CD4-positive, alpha-beta memory T cell (primary cell): ENCODE measurements at regions of chr1 and their contacts with region 1.

Region 1: DNA sequence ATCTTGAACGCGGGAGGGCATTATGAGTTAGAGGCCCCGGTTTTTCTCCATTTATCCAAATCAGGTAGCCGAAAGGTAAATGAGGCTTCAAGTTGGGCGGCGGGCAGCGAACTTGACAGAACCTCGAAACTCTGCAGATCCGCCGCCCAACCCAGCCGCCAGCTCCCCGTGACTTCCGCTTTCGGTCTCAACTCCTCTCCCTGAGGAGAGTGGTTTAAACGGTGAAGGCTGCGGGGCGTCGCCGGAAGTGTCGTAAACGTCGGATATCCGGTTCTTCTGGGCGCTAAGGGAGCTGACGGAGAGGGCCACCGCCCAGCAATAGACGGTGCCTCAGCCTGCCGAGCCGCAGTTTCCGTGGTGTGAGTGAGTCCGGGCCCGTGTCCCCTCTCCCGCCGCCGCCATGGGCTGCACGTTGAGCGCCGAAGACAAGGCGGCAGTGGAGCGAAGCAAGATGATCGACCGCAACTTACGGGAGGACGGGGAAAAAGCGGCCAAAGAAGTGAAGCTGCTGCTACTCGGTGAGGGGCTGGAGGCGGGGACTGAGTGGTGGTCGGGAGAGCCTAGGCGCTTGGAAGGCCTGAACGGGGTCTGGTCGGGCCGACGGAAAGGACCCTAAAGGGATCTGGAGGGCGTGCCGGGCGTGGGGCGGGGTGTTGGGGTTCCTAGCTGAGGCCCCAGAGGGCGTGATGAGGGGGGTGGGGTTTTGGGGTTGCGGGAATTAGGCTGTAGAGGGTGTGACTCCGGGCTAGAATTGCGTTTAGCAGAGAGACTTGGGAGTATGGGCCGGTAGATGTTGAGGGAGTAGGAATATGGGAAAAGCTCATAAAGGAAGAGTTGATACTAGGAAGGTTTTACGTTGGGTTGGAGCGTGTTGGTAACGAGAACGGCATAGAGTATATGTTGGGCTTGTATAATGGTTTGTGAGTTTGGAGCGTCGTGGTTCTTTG is at the start of gene GNAI3:
- DNase-seq: peak; percentile 94 to 99 (median 96)
- H3K4me3 ChIP-seq: peak within 1 kb of the TSS; percentile 94 to 99
- H3K4me3 Mint-ChIP-seq: peak within 1 kb of the TSS; percentile 93 to 100 (median 98)
- H3K27ac ChIP-seq: peak within 1 kb of the TSS; percentile 97
- H3K27ac Mint-ChIP-seq: peak within 1 kb of the TSS; percentile 92 to 100 (median 99)
- H3K4me1 ChIP-seq: peaks cover 60% of the 10 kb centered on the region
- H3K4me1 Mint-ChIP-seq: peaks cover 41 to 65% (median 49%) of the 10 kb centered on the region in 4 donors
- H3K27me3 ChIP-seq: no peaks in the 10 kb centered on the region
- H3K27me3 Mint-ChIP-seq: no peaks in the 10 kb centered on the region
- total RNA-seq, gene GNAI3: 7.7 to 8.1 TPM

Region 2: DNA sequence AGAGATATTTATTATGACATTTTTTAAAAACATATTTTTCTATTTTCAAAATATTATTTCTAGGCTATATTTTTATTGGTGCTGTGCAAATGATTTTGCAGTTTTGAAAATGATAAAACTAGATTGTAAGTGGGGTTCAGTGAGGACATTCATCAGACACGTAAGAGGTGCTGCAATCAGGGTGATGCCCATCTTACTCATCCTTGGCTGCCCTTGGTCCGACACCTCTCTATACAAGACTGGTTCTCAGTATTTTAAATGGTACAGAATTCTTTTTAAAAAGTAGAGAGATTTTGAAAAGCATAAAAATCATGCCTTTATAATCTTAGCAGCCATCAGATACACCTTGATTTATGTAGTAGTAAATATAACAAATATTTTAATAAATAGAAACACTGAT is 911.7 kb before region 1 on chr1:
- CTCF ChIA-PET with region 1: no interaction called
- POLR2A ChIA-PET with region 1: no interaction called
- intact Hi-C with region 1: no loop called
- DNase-seq: no peak
- H3K4me3 ChIP-seq: no peak overlapping the region
- H3K4me3 Mint-ChIP-seq: no peak overlapping the region
- H3K27ac ChIP-seq: no peak overlapping the region
- H3K27ac Mint-ChIP-seq: no peak overlapping the region
- H3K4me1 ChIP-seq: peaks cover 8% of the 10 kb centered on the region
- H3K4me1 Mint-ChIP-seq: peaks cover 7 to 15% (median 11%) of the 10 kb centered on the region in 4 donors
- H3K27me3 ChIP-seq: no peaks in the 10 kb centered on the region
- H3K27me3 Mint-ChIP-seq: no peaks in the 10 kb centered on the region

Region 3: DNA sequence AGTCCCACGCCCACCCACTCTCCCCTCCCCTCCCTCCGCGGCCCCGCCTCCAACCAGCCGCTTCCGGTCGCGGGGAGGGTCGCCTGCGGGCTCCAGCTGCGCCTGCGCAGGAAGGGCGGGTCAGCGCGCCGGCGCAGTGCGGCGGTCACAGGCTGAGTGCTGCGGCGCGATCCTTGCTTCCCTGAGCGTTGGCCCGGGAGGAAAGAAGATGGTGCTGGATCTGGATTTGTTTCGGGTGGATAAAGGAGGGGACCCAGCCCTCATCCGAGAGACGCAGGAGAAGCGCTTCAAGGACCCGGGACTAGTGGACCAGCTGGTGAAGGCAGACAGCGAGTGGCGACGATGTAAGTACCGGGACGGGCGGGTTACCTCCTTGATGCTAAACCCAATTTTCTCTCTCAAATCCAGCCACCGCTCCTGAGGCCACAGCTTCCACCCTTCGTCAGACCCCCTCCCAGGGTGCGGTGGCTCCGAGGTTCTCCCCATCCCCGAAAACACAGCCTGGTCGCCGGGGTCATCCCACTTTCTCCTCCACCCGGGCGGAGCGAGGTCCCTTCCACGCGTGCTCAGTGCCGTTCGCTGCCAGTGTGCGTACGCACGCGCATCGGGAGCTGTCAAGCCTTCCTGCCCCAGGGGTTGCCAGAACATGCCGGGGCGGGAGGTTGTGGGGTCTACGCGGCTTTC is 334.7 kb before region 1 on chr1 and contains the start of gene SARS1:
- CTCF ChIA-PET with region 1: no interaction called
- POLR2A ChIA-PET with region 1: interaction called, 10 read pairs
- intact Hi-C with region 1: no loop called
- DNase-seq: peak; percentile 81 to 93 (median 88)
- H3K4me3 ChIP-seq: peak within 1 kb of the TSS; percentile 71 to 94
- H3K4me3 Mint-ChIP-seq: peak within 1 kb of the TSS; percentile 95 to 100 (median 98)
- H3K27ac ChIP-seq: peak within 1 kb of the TSS; percentile 78
- H3K27ac Mint-ChIP-seq: peak within 1 kb of the TSS; percentile 93 to 99 (median 96)
- H3K4me1 ChIP-seq: peaks cover 37% of the 10 kb centered on the region
- H3K4me1 Mint-ChIP-seq: peaks cover 24 to 45% (median 38%) of the 10 kb centered on the region in 4 donors
- H3K27me3 ChIP-seq: no peaks in the 10 kb centered on the region
- H3K27me3 Mint-ChIP-seq: no peaks in the 10 kb centered on the region
- total RNA-seq, gene SARS1: 178 to 190 TPM

Region 4: DNA sequence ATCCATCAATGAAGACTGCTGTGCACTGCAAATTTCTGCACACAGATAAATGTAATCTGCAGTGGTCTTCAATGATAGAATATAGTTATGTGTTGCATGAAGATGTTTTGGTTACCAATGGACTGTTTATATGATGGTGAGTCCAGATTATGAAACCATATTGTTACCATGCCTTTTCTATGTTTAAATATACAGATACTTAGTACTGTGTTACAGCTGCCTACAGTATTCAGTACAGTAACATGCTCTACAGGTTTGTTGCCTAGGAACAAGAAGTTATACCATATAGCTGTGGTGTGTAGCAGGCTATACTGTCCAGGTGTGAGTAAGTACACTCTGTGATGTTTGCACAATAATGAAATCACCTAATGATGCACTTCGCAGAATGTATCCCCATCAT is 191.7 kb before region 1 on chr1:
- CTCF ChIA-PET with region 1: no interaction called
- POLR2A ChIA-PET with region 1: no interaction called
- intact Hi-C with region 1: no loop called
- DNase-seq: no peak
- H3K4me3 ChIP-seq: no peak overlapping the region
- H3K4me3 Mint-ChIP-seq: no peak overlapping the region
- H3K27ac ChIP-seq: no peak overlapping the region
- H3K27ac Mint-ChIP-seq: no peak overlapping the region
- H3K4me1 ChIP-seq: no peaks in the 10 kb centered on the region
- H3K4me1 Mint-ChIP-seq: peaks cover 0 to 5% (median 2%) of the 10 kb centered on the region in 4 donors
- H3K27me3 ChIP-seq: no peaks in the 10 kb centered on the region
- H3K27me3 Mint-ChIP-seq: peaks cover 10 to 14% of the 10 kb centered on the region in 2 donors

Region 5: GRCh38 chr1:109499661-109500536 is 48.7 kb before region 1 on chr1:
- CTCF ChIA-PET with region 1: interaction called, 6 read pairs
- POLR2A ChIA-PET with region 1: interaction called, 16 read pairs
- intact Hi-C with region 1: no loop called
- DNase-seq: peak; percentile 58 to 69 (median 61)
- H3K4me3 ChIP-seq: no peak overlapping the region
- H3K4me3 Mint-ChIP-seq: peak overlapping the region; percentile 52 to 75 (median 62)
- H3K27ac ChIP-seq: peak overlapping the region; percentile 86
- H3K27ac Mint-ChIP-seq: peak overlapping the region; percentile 70 to 97 (median 92)
- H3K4me1 ChIP-seq: peaks cover 98% of the 10 kb centered on the region
- H3K4me1 Mint-ChIP-seq: peaks cover 68 to 97% (median 86%) of the 10 kb centered on the region in 4 donors
- H3K27me3 ChIP-seq: no peaks in the 10 kb centered on the region
- H3K27me3 Mint-ChIP-seq: no peaks in the 10 kb centered on the region

Region 6: GRCh38 chr1:109521002-109521951 is 27.3 kb before region 1 on chr1:
- CTCF ChIA-PET with region 1: no interaction called
- POLR2A ChIA-PET with region 1: no interaction called
- intact Hi-C with region 1: no loop called
- DNase-seq: no peak
- H3K4me3 ChIP-seq: no peak overlapping the region
- H3K4me3 Mint-ChIP-seq: no peak overlapping the region
- H3K27ac ChIP-seq: no peak overlapping the region
- H3K27ac Mint-ChIP-seq: no peak overlapping the region
- H3K4me1 ChIP-seq: no peaks in the 10 kb centered on the region
- H3K4me1 Mint-ChIP-seq: peaks cover 0 to 2% (median 0%) of the 10 kb centered on the region in 4 donors
- H3K27me3 ChIP-seq: no peaks in the 10 kb centered on the region
- H3K27me3 Mint-ChIP-seq: peaks cover 2% of the 10 kb centered on the region in 2 donors

Region 7: GRCh38 chr1:109584766-109585165 is 36.2 kb after region 1 on chr1:
- CTCF ChIA-PET with region 1: interaction called, 3 read pairs
- POLR2A ChIA-PET with region 1: interaction called, 8 read pairs
- intact Hi-C with region 1: loop called (anchors 5 kb)
- DNase-seq: no peak
- H3K4me3 ChIP-seq: no peak overlapping the region
- H3K4me3 Mint-ChIP-seq: no peak overlapping the region
- H3K27ac ChIP-seq: no peak overlapping the region
- H3K27ac Mint-ChIP-seq: peak overlapping the region in 2 of 7 donors; percentile 3 to 9
- H3K4me1 ChIP-seq: no peaks in the 10 kb centered on the region
- H3K4me1 Mint-ChIP-seq: peaks cover 0 to 7% (median 1%) of the 10 kb centered on the region in 4 donors
- H3K27me3 ChIP-seq: no peaks in the 10 kb centered on the region
- H3K27me3 Mint-ChIP-seq: no peaks in the 10 kb centered on the region

Region 8: DNA sequence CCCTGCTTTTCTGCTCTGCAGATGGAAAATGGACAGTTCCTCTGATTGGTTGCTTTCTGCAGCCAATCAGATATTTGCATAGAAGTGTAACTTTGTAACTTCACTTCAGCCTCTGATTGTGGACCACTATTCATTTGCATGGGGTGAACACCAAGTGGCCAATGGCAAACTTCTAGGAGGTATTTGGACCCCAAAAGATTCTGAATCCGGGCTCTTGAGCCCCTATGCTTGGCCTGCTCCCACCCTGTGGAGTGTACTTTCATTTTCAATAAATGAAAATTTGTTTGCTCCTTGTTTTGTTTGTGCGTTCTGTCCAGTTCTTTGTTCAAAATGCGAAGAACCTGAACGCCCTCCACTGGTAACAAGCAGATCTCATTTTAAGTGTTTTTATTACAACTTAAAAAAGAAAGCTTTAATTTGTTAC is 100.9 kb after region 1 on chr1:
- CTCF ChIA-PET with region 1: interaction called, 12 read pairs
- POLR2A ChIA-PET with region 1: interaction called, 10 read pairs
- intact Hi-C with region 1: no loop called
- DNase-seq: no peak
- H3K4me3 ChIP-seq: no peak overlapping the region
- H3K4me3 Mint-ChIP-seq: no peak overlapping the region
- H3K27ac ChIP-seq: no peak overlapping the region
- H3K27ac Mint-ChIP-seq: peak overlapping the region in 1 of 7 donors; percentile 37
- H3K4me1 ChIP-seq: no peaks in the 10 kb centered on the region
- H3K4me1 Mint-ChIP-seq: peaks cover 0 to under 1% (median 0%) of the 10 kb centered on the region in 4 donors
- H3K27me3 ChIP-seq: peaks cover 7% of the 10 kb centered on the region
- H3K27me3 Mint-ChIP-seq: peaks cover 3 to 6% of the 10 kb centered on the region in 2 donors

Region 9: GRCh38 chr1:110034451-110035235 is 486.0 kb after region 1 on chr1 and contains the start of gene STRIP1:
- CTCF ChIA-PET with region 1: no interaction called
- POLR2A ChIA-PET with region 1: interaction called, 14 read pairs
- intact Hi-C with region 1: no loop called
- DNase-seq: peak; percentile 93 to 95 (median 95)
- H3K4me3 ChIP-seq: peak within 1 kb of the TSS; percentile 74 to 80
- H3K4me3 Mint-ChIP-seq: peak within 1 kb of the TSS; percentile 93 to 98 (median 97)
- H3K27ac ChIP-seq: peak within 1 kb of the TSS; percentile 97
- H3K27ac Mint-ChIP-seq: peak within 1 kb of the TSS; percentile 83 to 98 (median 95)
- H3K4me1 ChIP-seq: peaks cover 44% of the 10 kb centered on the region
- H3K4me1 Mint-ChIP-seq: peaks cover 34 to 66% (median 48%) of the 10 kb centered on the region in 4 donors
- H3K27me3 ChIP-seq: no peaks in the 10 kb centered on the region
- H3K27me3 Mint-ChIP-seq: no peaks in the 10 kb centered on the region
- total RNA-seq, gene STRIP1: 73.3 TPM

Region 10: DNA sequence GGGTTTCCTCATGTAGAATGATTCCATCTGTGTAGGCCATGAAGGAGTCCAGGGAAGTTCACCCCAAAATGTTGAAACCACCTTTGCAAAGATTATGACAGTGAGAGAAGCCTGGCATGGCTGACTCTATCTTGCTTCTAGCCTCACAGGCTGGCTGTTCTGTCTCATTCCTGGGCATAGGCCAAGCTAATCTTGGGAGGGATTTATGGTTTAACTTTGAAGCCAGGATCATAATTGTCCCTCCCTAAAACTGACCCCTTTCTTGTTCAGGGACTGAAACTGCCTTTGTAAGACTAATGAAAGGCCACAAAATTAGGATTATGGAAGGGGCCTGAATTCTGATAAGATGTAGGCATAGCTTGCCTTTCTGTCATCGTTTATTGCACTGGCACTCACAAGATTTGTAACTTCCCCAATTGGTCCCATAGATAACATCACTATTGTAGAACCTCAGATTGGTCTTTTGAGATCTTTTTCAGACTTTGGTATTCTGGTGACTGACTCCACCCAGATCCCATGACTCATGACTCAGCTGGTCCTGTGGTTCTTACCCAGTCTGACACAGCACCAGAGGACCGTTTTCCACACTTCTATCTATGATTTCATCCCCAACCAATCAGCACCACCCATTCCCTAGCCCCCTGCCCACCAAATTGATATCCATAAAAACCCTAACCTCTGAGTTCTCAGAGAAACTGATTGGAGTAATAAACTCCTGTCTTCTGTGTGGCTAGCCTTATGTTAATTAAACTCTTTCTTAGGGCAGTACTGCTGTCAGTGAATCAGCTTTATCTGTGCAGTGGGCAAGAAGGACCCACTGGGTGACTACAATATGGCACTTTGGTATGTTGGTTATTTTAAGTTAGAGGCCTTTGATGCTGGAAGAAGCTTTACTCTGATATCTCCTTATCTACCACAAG is 872.5 kb after region 1 on chr1:
- CTCF ChIA-PET with region 1: no interaction called
- POLR2A ChIA-PET with region 1: no interaction called
- intact Hi-C with region 1: no loop called
- DNase-seq: no peak
- H3K4me3 ChIP-seq: no peak overlapping the region
- H3K4me3 Mint-ChIP-seq: no peak overlapping the region
- H3K27ac ChIP-seq: no peak overlapping the region
- H3K27ac Mint-ChIP-seq: no peak overlapping the region
- H3K4me1 ChIP-seq: no peaks in the 10 kb centered on the region
- H3K4me1 Mint-ChIP-seq: no peaks in the 10 kb centered on the region
- H3K27me3 ChIP-seq: no peaks in the 10 kb centered on the region
- H3K27me3 Mint-ChIP-seq: peaks cover 0 to 2% of the 10 kb centered on the region in 2 donors